CD4-positive, alpha-beta memory T cell (primary cell): ENCODE measurements at regions of chr2 and their contacts with region 1.

Region 1: DNA sequence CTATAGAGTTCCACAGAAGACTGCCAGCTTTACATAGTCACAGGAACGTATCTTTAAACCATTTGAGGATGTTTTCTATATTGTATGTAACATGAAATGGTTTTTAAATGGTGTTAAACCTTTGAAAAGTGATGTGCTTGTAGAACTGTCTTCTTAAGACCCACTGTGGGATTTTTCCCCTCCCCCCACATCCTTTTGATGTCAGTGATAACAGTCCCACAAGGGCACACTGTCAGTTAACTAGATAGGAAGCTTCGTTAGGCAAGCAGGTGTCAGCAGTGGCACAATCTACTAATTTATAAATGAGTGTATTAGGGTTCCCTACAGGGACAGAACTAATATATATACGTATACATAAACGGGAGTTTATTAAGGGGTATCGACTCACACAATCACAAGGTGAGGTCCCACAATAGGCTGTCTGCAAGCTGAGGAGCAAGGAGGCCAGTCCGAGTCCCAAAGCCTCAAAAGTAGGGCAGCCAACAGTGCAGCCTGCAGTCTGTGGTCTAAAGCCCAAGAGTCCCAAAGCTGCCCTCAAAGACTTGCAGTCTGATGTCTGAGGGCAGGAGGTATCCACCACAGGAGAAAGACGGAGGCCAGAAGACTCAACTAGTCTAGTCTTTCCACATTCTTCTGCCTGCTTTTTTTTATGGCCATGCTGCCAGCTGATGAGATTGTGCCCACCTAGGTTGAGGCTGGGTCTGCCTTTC is 23.8 kb upstream of the HNRNPLL start:
- DNase-seq: peak; percentile 56 to 71 (median 64)
- H3K4me3 ChIP-seq: no peak overlapping the region
- H3K4me3 Mint-ChIP-seq: peak overlapping the region in 7 of 8 donors; percentile 22 to 70 (median 57)
- H3K27ac ChIP-seq: peak overlapping the region; percentile 7
- H3K27ac Mint-ChIP-seq: peak overlapping the region; percentile 43 to 89 (median 82)
- H3K4me1 ChIP-seq: peaks cover 21% of the 10 kb centered on the region
- H3K4me1 Mint-ChIP-seq: peaks cover 20 to 29% (median 26%) of the 10 kb centered on the region in 4 donors
- H3K27me3 ChIP-seq: no peaks in the 10 kb centered on the region
- H3K27me3 Mint-ChIP-seq: no peaks in the 10 kb centered on the region

Region 2: DNA sequence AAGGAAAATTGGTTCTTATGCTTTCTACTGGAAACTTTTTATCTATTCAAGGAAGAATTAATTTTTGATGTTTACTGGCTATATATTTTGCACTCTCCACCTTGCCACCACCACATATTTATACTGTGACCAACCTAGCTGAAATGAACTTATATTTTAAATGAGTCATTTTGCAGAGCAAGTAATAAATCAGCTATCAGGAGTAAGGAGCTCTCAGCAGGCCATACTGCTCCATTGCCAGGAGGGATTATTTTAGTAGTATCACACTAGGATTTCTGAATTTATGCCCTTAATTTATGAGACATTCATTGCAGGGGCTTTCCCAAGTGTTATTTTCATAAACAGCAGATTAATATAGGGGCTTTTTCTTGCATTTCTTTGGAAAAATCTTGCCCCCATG is 424.7 kb before region 1 on chr2:
- CTCF ChIA-PET with region 1: no interaction called
- POLR2A ChIA-PET with region 1: no interaction called
- intact Hi-C with region 1: no loop called
- DNase-seq: no peak
- H3K4me3 ChIP-seq: no peak overlapping the region
- H3K4me3 Mint-ChIP-seq: peak overlapping the region in 1 of 8 donors; percentile 18
- H3K27ac ChIP-seq: no peak overlapping the region
- H3K27ac Mint-ChIP-seq: no peak overlapping the region
- H3K4me1 ChIP-seq: no peaks in the 10 kb centered on the region
- H3K4me1 Mint-ChIP-seq: no peaks in the 10 kb centered on the region
- H3K27me3 ChIP-seq: no peaks in the 10 kb centered on the region
- H3K27me3 Mint-ChIP-seq: peaks cover 9 to 22% of the 10 kb centered on the region in 2 donors

Region 3: DNA sequence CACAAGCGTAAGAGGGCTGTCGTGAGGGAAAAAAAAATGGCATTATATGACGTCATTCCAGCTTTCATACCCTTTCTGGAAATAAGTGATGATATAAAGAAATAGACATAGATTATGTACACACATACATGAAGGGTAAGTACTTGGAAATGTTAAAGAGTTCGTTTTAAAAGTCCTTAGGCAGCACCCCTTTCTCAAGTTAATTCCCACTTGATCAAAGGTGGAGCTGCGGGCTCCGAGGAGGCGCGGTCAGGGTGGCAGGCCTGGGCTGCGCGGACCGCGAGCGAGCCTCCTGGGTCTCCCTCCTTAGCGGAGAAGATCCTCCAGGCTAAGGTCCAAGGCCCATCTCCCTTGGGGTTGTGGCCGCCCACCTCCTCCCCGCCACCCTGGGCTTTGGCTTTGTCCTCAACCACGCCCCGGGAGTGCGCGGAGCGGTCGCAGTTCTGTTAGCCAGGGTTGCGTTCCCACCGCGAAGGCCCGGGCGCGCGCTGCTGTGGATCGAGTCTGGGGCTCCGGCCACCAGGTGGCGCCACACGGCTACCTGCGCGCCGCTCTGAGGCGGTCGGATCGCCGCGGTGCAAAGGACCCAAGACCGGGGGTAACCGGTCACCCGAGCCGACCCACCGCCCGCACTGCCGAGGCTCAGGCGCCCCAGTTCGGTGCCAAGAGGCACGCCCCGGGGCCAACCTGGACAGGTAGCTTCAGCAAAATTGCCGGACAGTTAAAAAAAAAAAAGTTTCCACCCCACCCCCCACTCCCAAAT is 90.6 kb before region 1 on chr2:
- CTCF ChIA-PET with region 1: no interaction called
- POLR2A ChIA-PET with region 1: no interaction called
- intact Hi-C with region 1: no loop called
- DNase-seq: peak; percentile 60 to 77 (median 70)
- H3K4me3 ChIP-seq: peak overlapping the region; percentile 47 to 52
- H3K4me3 Mint-ChIP-seq: peak overlapping the region; percentile 25 to 77 (median 52)
- H3K27ac ChIP-seq: no peak overlapping the region
- H3K27ac Mint-ChIP-seq: peak overlapping the region in 1 of 7 donors; percentile 36
- H3K4me1 ChIP-seq: peaks cover 9% of the 10 kb centered on the region
- H3K4me1 Mint-ChIP-seq: peaks cover 0 to 6% (median 2%) of the 10 kb centered on the region in 4 donors
- H3K27me3 ChIP-seq: no peaks in the 10 kb centered on the region
- H3K27me3 Mint-ChIP-seq: peaks cover 0 to 2% of the 10 kb centered on the region in 2 donors

Region 4: GRCh38 chr2:38554973-38555595 is 71.4 kb before region 1 on chr2:
- CTCF ChIA-PET with region 1: no interaction called
- POLR2A ChIA-PET with region 1: no interaction called
- intact Hi-C with region 1: no loop called
- DNase-seq: no peak
- H3K4me3 ChIP-seq: no peak overlapping the region
- H3K4me3 Mint-ChIP-seq: no peak overlapping the region
- H3K27ac ChIP-seq: no peak overlapping the region
- H3K27ac Mint-ChIP-seq: peak overlapping the region in 1 of 7 donors; percentile 32
- H3K4me1 ChIP-seq: peaks cover 5% of the 10 kb centered on the region
- H3K4me1 Mint-ChIP-seq: peaks cover 9 to 20% (median 16%) of the 10 kb centered on the region in 4 donors
- H3K27me3 ChIP-seq: no peaks in the 10 kb centered on the region
- H3K27me3 Mint-ChIP-seq: no peaks in the 10 kb centered on the region

Region 5: DNA sequence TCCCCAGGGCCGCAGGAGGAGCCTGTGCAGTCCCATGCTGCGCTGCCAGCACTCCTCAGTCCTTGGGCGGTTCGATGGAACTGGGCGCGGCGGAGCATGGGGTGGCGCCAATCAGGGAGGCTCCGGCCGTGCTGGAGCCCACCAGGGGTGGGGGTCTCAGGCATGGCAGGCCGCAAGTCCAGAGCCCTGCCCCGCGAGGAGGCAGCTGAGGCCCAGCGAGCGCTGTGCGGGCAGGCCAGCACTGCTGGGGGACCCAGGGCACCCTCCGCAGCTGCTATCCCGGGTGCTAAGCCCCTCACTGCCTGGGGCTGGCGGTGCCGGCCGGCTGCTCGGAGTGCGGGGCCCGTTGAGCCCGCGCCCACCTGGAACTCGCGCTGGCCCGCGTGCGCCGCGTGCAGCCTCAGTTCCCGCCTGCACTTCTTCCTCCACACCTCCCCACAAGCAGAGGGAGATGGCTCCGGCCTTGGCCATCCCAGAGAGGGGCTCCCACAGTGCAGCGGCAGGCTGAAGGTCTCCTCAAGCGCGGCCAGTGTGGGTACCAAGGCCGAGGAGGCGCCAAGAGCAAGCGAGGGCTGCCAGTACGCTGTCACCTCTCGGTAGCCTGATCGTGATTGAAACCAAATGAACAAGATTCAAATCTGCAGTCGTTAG is 16.7 kb after region 1 on chr2:
- CTCF ChIA-PET with region 1: no interaction called
- POLR2A ChIA-PET with region 1: interaction called, 19 read pairs
- intact Hi-C with region 1: no loop called
- DNase-seq: peak in 1 of 5 donors; percentile 5
- H3K4me3 ChIP-seq: peak overlapping the region in 1 of 2 donors; percentile 12
- H3K4me3 Mint-ChIP-seq: peak overlapping the region in 6 of 8 donors; percentile 68 to 89 (median 77)
- H3K27ac ChIP-seq: peak overlapping the region; percentile 51
- H3K27ac Mint-ChIP-seq: peak overlapping the region; percentile 73 to 97 (median 95)
- H3K4me1 ChIP-seq: peaks cover 30% of the 10 kb centered on the region
- H3K4me1 Mint-ChIP-seq: peaks cover 17 to 39% (median 26%) of the 10 kb centered on the region in 4 donors
- H3K27me3 ChIP-seq: no peaks in the 10 kb centered on the region
- H3K27me3 Mint-ChIP-seq: no peaks in the 10 kb centered on the region

Region 6: GRCh38 chr2:38850045-38850444 is 223.6 kb after region 1 on chr2:
- CTCF ChIA-PET with region 1: no interaction called
- POLR2A ChIA-PET with region 1: no interaction called
- intact Hi-C with region 1: no loop called
- DNase-seq: no peak
- H3K4me3 ChIP-seq: no peak overlapping the region
- H3K4me3 Mint-ChIP-seq: peak overlapping the region in 1 of 8 donors; percentile 4
- H3K27ac ChIP-seq: no peak overlapping the region
- H3K27ac Mint-ChIP-seq: peak overlapping the region in 2 of 7 donors; percentile 5 to 10
- H3K4me1 ChIP-seq: no peaks in the 10 kb centered on the region
- H3K4me1 Mint-ChIP-seq: peaks cover 0 to 2% (median 0%) of the 10 kb centered on the region in 4 donors
- H3K27me3 ChIP-seq: no peaks in the 10 kb centered on the region
- H3K27me3 Mint-ChIP-seq: no peaks in the 10 kb centered on the region